Mammary epithelial cell (primary cell): ENCODE measurements at regions of chr1 and their contacts with region 1.

Region 1: DNA sequence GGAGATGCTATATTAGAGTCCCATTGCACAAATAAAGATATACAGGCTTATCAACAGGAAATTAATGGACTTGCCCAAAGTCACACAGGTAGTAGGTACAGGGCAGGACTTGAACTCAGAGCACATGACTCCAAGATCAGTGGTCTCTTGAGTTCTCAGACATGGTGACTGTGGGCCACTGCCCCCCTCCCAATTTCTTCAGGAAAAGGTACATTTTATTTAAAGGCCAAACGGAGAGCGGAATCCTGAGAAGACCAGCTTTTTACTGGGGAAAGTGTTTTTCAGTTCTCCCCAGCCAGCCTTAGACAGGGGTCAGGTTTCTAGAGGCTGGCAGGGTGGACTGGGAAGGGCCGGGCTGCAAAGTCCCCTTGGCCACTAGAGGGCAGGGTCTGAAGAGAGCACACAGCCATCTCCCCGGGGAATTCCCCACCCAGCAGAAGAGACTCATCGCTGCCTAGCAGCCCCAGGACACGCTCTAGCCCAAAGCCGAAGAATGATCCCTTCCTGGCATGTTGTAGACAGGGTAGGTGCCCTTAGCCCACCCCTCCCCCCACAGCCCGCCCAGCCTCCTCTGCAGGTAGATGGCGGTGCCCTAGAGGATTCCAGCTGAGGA is 29.7 kb downstream of the ACP6 start:
- DNase-seq: peak; percentile 78
- H3K4me3 ChIP-seq: no peak overlapping the region
- H3K27ac ChIP-seq: no peak overlapping the region
- H3K4me1 ChIP-seq: no peaks in the 10 kb centered on the region
- H3K27me3 ChIP-seq: no peaks in the 10 kb centered on the region
- CTCF ChIP-seq: peak; percentile 74 to 98

Region 2: DNA sequence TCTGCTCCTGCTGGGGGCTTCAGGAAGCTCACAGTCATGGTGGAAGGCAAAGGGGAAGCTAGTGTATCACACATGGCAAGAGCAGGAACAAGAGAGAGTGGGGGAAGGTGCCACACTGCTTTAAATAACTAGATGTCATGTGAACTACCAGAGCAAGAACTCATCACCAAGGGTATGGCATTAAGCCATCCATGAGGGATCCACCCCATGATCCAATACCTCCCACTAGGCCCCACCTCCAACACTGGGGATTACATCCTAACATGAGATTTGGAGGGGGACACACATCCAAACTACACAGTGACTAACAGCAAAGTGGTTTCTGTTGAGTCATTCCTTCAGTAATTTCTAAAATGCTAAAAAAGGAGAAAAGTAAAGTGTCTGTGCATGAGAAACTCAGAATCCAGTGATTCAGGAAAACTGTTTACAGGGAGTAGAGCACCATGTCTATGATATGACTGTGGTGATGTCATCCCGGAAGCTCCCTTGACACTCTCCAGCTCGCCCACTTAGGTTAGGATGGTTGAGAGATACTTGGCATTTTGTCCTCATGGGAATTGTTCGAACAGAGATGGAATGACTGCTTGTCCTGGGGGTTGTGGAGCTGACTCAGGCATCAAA is 347.9 kb before region 1 on chr1:
- CTCF ChIA-PET with region 1: no interaction called
- dilution Hi-C with region 1: no loop called
- in situ Hi-C with region 1: loop called in 1 of 2 experiments (anchors 25 kb)
- intact Hi-C with region 1: no loop called
- DNase-seq: peak; percentile 82
- H3K4me3 ChIP-seq: no peak overlapping the region
- H3K27ac ChIP-seq: peak overlapping the region; percentile 66
- H3K4me1 ChIP-seq: peaks cover 8% of the 10 kb centered on the region
- H3K27me3 ChIP-seq: no peaks in the 10 kb centered on the region
- CTCF ChIP-seq: no peak

Region 3: GRCh38 chr1:147494998-147495580 is 145.6 kb before region 1 on chr1:
- CTCF ChIA-PET with region 1: no interaction called
- dilution Hi-C with region 1: loop called (anchors 25 kb)
- in situ Hi-C with region 1: loop called in 1 of 2 experiments (anchors 10 kb)
- intact Hi-C with region 1: loop called (anchors 5 kb)
- DNase-seq: peak; percentile 51
- H3K4me3 ChIP-seq: no peak overlapping the region
- H3K27ac ChIP-seq: no peak overlapping the region
- H3K4me1 ChIP-seq: no peaks in the 10 kb centered on the region
- H3K27me3 ChIP-seq: peaks cover 3% of the 10 kb centered on the region
- CTCF ChIP-seq: peak; percentile 87 to 95

Region 4: GRCh38 chr1:147515046-147515869 is 125.4 kb before region 1 on chr1:
- CTCF ChIA-PET with region 1: no interaction called
- dilution Hi-C with region 1: loop called (anchors 25 kb)
- in situ Hi-C with region 1: loop called in 1 of 2 experiments (anchors 10 kb)
- intact Hi-C with region 1: loop called (anchors 1 kb)
- DNase-seq: peak; percentile 64
- H3K4me3 ChIP-seq: no peak overlapping the region
- H3K27ac ChIP-seq: no peak overlapping the region
- H3K4me1 ChIP-seq: no peaks in the 10 kb centered on the region
- H3K27me3 ChIP-seq: peaks cover 3% of the 10 kb centered on the region
- CTCF ChIP-seq: peak in 1 of 2 donors; percentile 47

Region 5: GRCh38 chr1:147670317-147671041 is 29.8 kb after region 1 on chr1 and contains the start of gene ACP6:
- CTCF ChIA-PET with region 1: no interaction called
- dilution Hi-C with region 1: no loop called
- in situ Hi-C with region 1: no loop called
- intact Hi-C with region 1: loop called (anchors 2 kb)
- DNase-seq: peak; percentile 88
- H3K4me3 ChIP-seq: peak within 1 kb of the TSS; percentile 63 to 75 (median 69)
- H3K27ac ChIP-seq: peak within 1 kb of the TSS; percentile 5
- H3K4me1 ChIP-seq: peaks cover 4% of the 10 kb centered on the region
- H3K27me3 ChIP-seq: no peaks in the 10 kb centered on the region
- CTCF ChIP-seq: no peak
- total RNA-seq, gene ACP6: 7.2 to 10.4 TPM

Region 6: GRCh38 chr1:147683163-147683763 is 42.6 kb after region 1 on chr1:
- CTCF ChIA-PET with region 1: no interaction called
- dilution Hi-C with region 1: no loop called
- in situ Hi-C with region 1: no loop called
- intact Hi-C with region 1: no loop called
- DNase-seq: no peak
- H3K4me3 ChIP-seq: no peak overlapping the region
- H3K27ac ChIP-seq: no peak overlapping the region
- H3K4me1 ChIP-seq: no peaks in the 10 kb centered on the region
- H3K27me3 ChIP-seq: peaks cover 1% of the 10 kb centered on the region
- CTCF ChIP-seq: no peak

Region 7: GRCh38 chr1:147700042-147701006 is 59.7 kb after region 1 on chr1:
- CTCF ChIA-PET with region 1: no interaction called
- dilution Hi-C with region 1: no loop called
- in situ Hi-C with region 1: loop called in 1 of 2 experiments (anchors 5 kb)
- intact Hi-C with region 1: loop called (anchors 1 kb)
- DNase-seq: peak; percentile 47
- H3K4me3 ChIP-seq: no peak overlapping the region
- H3K27ac ChIP-seq: no peak overlapping the region
- H3K4me1 ChIP-seq: no peaks in the 10 kb centered on the region
- H3K27me3 ChIP-seq: no peaks in the 10 kb centered on the region
- CTCF ChIP-seq: peak; percentile 97

Region 8: DNA sequence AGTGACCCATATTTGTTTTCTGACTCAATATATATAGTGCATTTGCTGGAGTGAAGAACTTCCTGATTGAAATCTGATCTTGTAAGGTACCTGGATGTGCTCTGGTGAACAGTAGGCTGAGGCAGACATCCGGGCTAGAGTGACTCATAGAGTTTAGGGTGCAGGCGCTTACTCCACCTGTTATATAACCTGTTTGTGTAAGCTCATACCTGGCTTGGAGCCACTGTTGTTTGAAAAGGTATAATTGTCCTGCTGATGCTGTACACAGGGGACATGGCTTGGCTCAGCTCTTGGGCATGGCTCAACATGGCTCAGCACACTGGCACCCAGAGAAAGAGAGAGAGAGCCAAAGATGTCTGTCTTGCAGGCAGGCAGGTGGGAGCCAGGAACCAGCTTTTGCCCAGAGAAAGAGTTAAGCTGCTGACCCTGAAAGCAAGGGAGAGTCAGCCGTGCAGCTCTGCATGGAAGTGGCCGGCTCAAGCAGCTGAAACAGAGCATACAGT is 76.5 kb after region 1 on chr1:
- CTCF ChIA-PET with region 1: no interaction called
- dilution Hi-C with region 1: no loop called
- in situ Hi-C with region 1: no loop called
- intact Hi-C with region 1: loop called (anchors 5 kb)
- DNase-seq: peak; percentile 91
- H3K4me3 ChIP-seq: no peak overlapping the region
- H3K27ac ChIP-seq: no peak overlapping the region
- H3K4me1 ChIP-seq: peaks cover 29% of the 10 kb centered on the region
- H3K27me3 ChIP-seq: no peaks in the 10 kb centered on the region
- CTCF ChIP-seq: no peak